A673 (cell line): ENCODE measurements at regions of chr1 and their contacts with region 1.

Region 1: DNA sequence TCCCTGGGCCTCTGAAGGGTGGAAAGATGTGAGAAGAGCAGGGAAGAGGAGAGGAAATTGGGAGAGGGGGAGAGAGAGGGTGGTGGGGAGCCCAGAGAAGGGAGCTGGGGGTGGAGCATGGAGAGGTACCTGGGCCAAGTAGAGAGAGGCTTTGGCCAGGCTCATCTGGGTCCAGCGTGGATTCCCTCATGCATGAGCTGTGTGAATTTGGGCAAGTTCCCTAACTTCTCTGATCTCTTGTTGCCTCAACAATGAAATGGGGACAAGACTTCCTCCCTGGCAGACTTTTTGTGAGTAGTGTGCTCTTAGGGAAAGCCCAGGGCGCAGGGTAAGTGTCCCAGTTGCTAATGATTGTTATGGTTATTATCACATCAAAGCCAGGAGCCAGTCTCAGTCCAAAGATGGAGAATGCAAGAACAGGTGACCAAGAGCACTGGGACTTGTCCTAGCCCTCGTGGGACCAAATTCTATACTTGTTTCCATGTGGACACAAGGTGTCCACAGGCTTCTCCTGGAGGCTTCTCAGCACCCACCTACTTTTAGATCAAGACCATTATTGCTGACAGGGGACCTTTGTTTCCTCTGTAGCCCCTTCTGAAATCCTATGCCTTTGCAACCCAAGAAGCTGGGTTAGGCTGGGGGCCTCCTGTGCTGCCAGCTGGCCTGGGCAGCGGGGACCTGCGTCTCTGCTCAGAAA is 13.9 kb downstream of the IL6R start:
- DNase-seq: no peak
- H3K4me3 ChIP-seq: no peak overlapping the region
- H3K27ac ChIP-seq: no peak overlapping the region
- H3K4me1 ChIP-seq: peaks cover 15% of the 10 kb centered on the region
- H3K27me3 ChIP-seq: no peaks in the 10 kb centered on the region
- CTCF ChIP-seq: no peak

Region 2: DNA sequence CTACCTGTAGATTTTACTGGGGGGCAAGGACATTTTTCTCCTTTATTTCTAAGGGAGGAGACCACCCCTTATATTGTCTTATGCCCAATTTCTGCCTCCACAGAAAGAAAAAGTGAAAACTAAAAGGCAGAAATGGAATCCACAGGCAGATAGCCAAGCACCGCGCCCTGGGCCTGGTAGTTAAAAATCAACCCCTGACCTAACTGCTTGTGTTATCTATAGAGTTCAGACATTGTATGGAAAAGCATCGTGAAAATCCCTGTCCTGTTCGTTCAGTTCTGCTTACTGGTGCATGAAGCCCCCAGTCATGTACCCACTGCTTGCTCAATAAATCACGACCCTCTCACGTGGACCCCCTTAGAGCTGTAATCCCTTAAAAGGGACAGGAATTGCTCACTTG is 47.6 kb before region 1 on chr1:
- CTCF ChIA-PET with region 1: no interaction called
- POLR2A ChIA-PET with region 1: interaction called, 14 read pairs
- intact Hi-C with region 1: no loop called
- DNase-seq: no peak
- H3K4me3 ChIP-seq: no peak overlapping the region
- H3K27ac ChIP-seq: no peak overlapping the region
- H3K4me1 ChIP-seq: no peaks in the 10 kb centered on the region
- H3K27me3 ChIP-seq: no peaks in the 10 kb centered on the region
- CTCF ChIP-seq: no peak